ENCODE measurements at regions of chr9 and their contacts with region 1.

Region 1: GRCh38 chr9:38183994-38184568 is 115.1 kb upstream of the SHB start:
- DNase-seq: no peak
- H3K4me3 ChIP-seq: no peak overlapping the region
- CTCF ChIP-seq: no peak

Region 2: DNA sequence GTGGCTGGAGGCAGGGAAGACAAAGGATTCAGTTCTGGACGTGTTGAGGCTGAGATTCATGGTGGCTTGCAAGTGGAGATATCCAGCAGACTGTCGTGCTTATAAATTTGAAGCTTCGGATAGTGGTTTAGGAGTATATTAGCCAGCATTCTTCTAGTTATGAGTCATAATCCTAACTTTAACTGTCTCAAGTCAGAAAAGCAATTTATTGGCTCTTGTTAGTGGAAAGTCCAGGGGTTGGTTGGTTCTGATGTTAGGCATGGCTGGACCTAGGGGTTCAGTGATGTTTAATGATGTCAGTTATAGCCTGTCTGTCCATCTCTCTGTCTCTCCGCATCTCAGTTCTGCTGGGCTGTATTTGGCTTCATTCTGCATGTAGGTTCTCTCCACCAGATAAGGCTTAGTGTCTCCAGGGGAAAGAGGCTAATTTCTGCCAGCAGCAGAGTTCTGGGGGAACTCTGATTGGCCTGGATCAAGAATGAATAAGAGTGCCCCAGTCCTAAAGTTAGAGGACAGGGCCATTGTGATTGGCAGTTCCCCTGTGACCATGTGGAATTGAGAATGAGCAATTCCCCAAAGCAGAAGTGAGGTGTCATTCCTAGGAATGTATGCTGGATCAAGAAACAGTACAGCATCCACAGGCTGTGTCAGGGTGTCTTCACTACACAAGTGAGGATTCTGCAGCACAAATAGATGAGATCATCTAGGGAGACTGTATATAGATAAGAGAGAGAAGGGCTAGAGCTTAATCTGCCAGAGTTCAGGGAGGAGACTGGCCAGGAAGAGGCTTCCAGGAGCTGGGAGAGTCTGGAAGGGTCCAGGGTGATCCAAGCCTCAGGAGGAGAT is 42.1 kb before region 1 on chr9:
- in situ Hi-C with region 1: loop called (anchors 5 kb)
- DNase-seq: peak; percentile 38
- H3K4me3 ChIP-seq: no peak overlapping the region
- CTCF ChIP-seq: no peak

Measured in astrocyte of the cerebellum (primary cell).